ENCODE measurements at regions of chr3 and their contacts with region 1.

Region 1: GRCh38 chr3:135895106-135895733 is 70.3 kb upstream of the PPP2R3A start:
- DNase-seq: peak; percentile 70 to 85 (median 75)
- ATAC-seq: no peak
- H3K4me3 ChIP-seq: no peak overlapping the region
- H3K27ac ChIP-seq: no peak overlapping the region
- H3K4me1 ChIP-seq: peaks cover 10% of the 10 kb centered on the region
- H3K27me3 ChIP-seq: no peaks in the 10 kb centered on the region
- CTCF ChIP-seq: peak; percentile 72 to 83 (median 76)
- POLR2A ChIP-seq: no peak

Region 2: GRCh38 chr3:134600685-134601463 is 1294.3 kb before region 1 on chr3:
- intact Hi-C with region 1: loop called (anchors 10 kb)
- DNase-seq: peak; percentile 47 to 66 (median 54)
- ATAC-seq: peak; percentile 68
- H3K4me3 ChIP-seq: no peak overlapping the region
- H3K27ac ChIP-seq: no peak overlapping the region
- H3K4me1 ChIP-seq: no peaks in the 10 kb centered on the region
- H3K27me3 ChIP-seq: no peaks in the 10 kb centered on the region
- CTCF ChIP-seq: peak; percentile 78 to 98 (median 83)
- POLR2A ChIP-seq: no peak

Region 3: DNA sequence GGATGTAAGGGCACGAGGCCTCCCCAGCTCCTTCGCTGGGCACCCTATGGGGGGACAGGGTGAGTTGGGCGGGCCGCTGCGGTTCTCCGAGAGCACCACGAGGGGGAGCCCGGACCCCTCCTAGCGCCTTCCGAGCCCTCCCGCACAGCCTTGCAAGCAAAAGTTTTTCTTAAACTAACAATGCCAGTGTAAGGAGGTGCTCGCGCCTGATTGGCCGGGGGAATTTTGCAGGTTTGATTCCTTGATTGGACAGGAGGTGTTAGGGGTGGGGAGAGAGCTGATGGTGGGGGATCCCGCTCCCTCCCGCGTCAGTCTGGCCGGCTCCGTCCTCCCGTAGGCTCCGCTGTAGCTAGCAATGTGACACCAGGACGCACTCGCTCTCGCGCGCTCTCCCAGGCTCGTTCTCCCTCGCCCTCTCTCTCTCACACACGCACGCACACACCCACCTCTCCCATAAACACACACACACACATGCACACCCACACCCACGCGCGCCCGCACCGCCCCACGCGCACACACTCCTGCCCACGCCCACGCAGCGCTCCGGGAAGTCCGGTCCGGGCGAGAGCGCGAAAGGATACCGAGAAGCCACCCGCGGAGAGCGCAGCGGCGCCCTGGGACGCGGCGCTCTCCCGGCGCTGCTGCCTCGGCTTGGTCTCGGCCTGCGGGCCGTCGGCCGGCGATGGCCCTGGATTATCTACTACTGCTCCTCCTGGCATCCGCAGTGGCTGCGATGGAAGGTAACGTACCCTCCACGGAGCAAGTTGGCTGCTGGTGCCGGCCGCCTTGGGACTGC is 1100.1 kb before region 1 on chr3 and contains the start of gene EPHB1:
- intact Hi-C with region 1: loop called (anchors 10 kb)
- DNase-seq: peak; percentile 62 to 79 (median 71)
- ATAC-seq: peak; percentile 86
- H3K4me3 ChIP-seq: peak within 1 kb of the TSS in 1 of 2 donors; percentile 40
- H3K27ac ChIP-seq: no peak within 1 kb of the TSS
- H3K4me1 ChIP-seq: peaks cover 24% of the 10 kb centered on the region
- H3K27me3 ChIP-seq: peaks cover 0 to 7% of the 10 kb centered on the region in 2 donors
- CTCF ChIP-seq: peak; percentile 67 to 80 (median 75)
- POLR2A ChIP-seq: no peak
- total RNA-seq, gene EPHB1: 1.3 TPM in 1 of 2 donors, not detected in the other

Region 4: GRCh38 chr3:135806317-135806716 is 88.9 kb before region 1 on chr3:
- intact Hi-C with region 1: no loop called
- DNase-seq: no peak
- ATAC-seq: no peak
- H3K4me3 ChIP-seq: no peak overlapping the region
- H3K27ac ChIP-seq: no peak overlapping the region
- H3K4me1 ChIP-seq: no peaks in the 10 kb centered on the region
- H3K27me3 ChIP-seq: no peaks in the 10 kb centered on the region
- CTCF ChIP-seq: no peak
- POLR2A ChIP-seq: no peak